ENCODE measurements at regions of chr16 and their contacts with region 1.

Region 1: GRCh38 chr16:70614208-70614951 is 32.0 kb upstream of the IL34 start:
- DNase-seq: no peak
- ATAC-seq: no peak
- H3K4me3 ChIP-seq: no peak overlapping the region
- H3K27ac ChIP-seq: no peak overlapping the region
- H3K4me1 ChIP-seq: no peaks in the 10 kb centered on the region
- CTCF ChIP-seq: no peak
- EP300 ChIP-seq: no peak
- POLR2A ChIP-seq: no peak
- RAD21 ChIP-seq: no peak

Region 2: DNA sequence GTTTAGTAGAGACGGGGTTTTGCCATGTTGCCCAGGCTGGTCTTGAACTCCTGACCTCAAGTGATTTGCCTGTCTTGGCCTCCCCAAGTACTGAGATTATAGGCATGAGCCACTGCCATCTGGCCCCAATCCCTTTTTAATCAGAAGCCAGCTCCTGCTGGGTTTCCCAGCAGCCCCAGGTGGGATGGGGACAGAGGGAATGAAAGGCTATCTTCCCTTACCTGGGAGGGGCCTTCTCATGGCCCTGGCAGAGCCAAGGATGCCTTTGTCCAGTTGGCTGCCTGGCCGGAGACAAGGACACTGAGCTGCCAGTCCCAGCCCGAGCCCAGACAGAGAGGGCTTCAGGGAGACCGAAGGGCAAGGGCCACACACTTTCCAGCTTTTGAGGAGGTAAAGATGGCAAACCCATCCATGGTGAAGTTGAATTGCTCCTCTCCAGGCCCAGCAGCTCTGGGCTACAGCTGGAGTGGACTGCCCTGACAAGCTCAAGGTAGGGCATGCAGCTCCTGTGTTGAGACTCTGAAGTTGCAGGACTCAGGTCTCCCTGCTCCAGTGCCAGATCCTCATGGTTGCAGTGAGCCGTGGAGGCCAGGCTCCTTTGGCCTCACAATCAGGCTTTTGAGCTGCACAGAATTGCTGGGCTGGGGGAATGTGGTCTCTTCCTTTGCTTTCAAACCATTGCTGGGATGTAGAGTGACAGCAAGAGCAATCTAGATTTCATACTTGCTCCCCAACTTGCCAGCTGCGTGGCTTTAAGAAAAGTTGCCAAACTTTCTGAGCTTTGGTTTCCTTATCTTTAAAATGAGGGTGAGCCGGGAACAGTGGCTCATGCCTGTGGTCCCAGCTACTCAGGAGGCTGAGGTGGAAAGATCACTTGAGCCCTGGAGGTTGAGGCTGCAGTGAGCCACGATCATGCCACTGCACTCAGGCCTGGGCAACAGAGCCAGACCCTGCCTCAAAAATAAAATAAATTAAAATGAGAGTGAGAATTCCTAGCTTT is 12.5 kb before region 1 on chr16:
- CTCF ChIA-PET with region 1: interaction called, 11 read pairs
- POLR2A ChIA-PET with region 1: no interaction called
- DNase-seq: no peak
- ATAC-seq: no peak
- H3K4me3 ChIP-seq: no peak overlapping the region
- H3K27ac ChIP-seq: no peak overlapping the region
- H3K4me1 ChIP-seq: no peaks in the 10 kb centered on the region
- CTCF ChIP-seq: no peak
- EP300 ChIP-seq: no peak
- POLR2A ChIP-seq: no peak
- RAD21 ChIP-seq: no peak